SK-N-SH (cell line): ENCODE measurements at regions of chr12 and their contacts with region 1.

Region 1: GRCh38 chr12:121811434-121812319 is 7.9 kb downstream of the SETD1B start:
- DNase-seq: peak; percentile 96
- H3K4me3 ChIP-seq: peak overlapping the region; percentile 62 to 93
- H3K27ac ChIP-seq: peak overlapping the region; percentile 56 to 74; a peak in 3 of 4 replicates
- H3K4me1 ChIP-seq: peaks cover 22 to 24% of the 10 kb centered on the region in 2 experiments; a peak in 2 of 4 replicates
- H3K27me3 ChIP-seq: no peaks in the 10 kb centered on the region
- CTCF ChIP-seq: peak; percentile 91
- EP300 ChIP-seq: no peak
- RAD21 ChIP-seq: peak; percentile 79

Region 2: DNA sequence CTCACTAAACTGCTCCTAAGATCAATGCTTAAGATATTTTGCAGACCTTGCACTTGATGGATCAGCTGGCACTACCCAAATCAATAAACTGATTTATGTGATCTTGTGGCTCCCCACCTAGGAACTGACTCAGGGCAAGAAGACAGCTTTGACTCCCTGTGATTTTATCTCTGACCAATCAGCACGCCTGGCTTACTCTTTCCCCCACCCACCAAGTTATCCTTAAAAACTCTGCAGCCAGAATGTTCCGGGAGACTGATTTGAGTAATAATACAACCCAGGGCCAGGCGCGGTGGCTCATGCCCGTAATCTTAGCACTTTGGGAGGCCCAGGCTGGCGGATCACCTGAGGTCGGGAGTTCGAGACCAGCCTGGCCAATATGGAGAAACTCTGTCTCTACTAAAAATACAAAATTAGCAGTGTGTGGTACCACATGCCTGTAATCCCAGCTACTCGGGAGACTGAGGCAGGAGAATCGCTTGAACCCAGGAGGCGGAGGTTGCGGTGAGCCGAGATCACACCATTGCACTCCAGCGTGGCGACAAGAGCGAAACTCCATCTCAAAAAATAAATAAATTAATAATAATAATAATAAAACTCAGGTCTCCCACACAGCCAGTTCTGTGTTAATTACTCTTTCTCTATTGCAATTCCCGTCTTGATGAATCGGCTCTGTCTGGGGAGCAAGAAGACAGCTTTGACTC is 154.2 kb before region 1 on chr12:
- CTCF ChIA-PET with region 1: no interaction called
- POLR2A ChIA-PET with region 1: no interaction called
- DNase-seq: no peak
- H3K4me3 ChIP-seq: no peak overlapping the region
- H3K27ac ChIP-seq: no peak overlapping the region
- H3K4me1 ChIP-seq: no peaks in the 10 kb centered on the region; a peak in 1 of 4 replicates
- H3K27me3 ChIP-seq: no peaks in the 10 kb centered on the region
- CTCF ChIP-seq: no peak
- EP300 ChIP-seq: no peak
- RAD21 ChIP-seq: no peak

Region 3: GRCh38 chr12:121773011-121773777 is 38.5 kb before region 1 on chr12:
- CTCF ChIA-PET with region 1: interaction called, 36 read pairs
- POLR2A ChIA-PET with region 1: no interaction called
- DNase-seq: peak; percentile 91
- H3K4me3 ChIP-seq: no peak overlapping the region; a peak in 1 of 4 replicates
- H3K27ac ChIP-seq: peak overlapping the region in 1 of 2 experiments; percentile 45; a peak in 1 of 4 replicates
- H3K4me1 ChIP-seq: peaks cover 0 to 12% of the 10 kb centered on the region in 2 experiments; a peak in 1 of 4 replicates
- H3K27me3 ChIP-seq: no peaks in the 10 kb centered on the region
- CTCF ChIP-seq: peak; percentile 89
- EP300 ChIP-seq: 0 out of 4 replicates have a peak, but pooled peaks of 1 of the 2 experiments have one; percentile 12
- RAD21 ChIP-seq: peak; percentile 88

Region 4: DNA sequence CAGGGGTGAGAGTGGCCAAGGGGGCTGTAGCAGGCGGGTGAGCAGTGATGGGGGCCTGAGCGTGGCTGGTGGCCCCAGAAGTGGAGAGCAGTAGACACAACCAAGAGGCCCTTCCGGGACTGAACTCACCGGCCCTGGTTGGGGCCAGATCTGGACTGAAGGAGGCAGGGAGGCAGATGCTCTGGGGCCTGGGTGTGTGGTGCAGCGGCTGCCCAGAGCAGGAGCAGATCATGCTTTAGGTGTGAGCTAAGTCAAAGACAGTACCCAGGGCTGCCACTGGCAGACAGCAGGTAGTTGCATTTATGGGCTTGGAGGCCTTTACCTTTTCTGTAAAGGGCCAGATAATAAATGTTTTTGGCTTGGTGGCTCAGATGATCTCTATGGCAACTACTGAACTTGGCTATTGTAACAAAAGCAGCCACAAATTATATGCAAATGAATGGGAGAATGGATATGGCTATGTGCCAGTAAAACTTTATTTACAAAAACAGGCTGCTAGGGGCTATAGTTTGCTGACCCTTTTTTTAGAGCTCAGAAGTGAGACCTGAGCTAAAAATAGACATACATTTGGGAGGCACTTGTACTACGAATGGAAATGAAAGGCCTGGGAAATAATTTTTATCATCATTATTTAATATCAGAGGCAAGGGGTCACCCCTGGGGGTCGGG is 17.7 kb after region 1 on chr12:
- CTCF ChIA-PET with region 1: interaction called, 50 read pairs
- POLR2A ChIA-PET with region 1: interaction called, 3 read pairs
- DNase-seq: no peak
- H3K4me3 ChIP-seq: no peak overlapping the region
- H3K27ac ChIP-seq: no peak overlapping the region
- H3K4me1 ChIP-seq: peaks cover 0 to 4% of the 10 kb centered on the region in 2 experiments; a peak in 1 of 4 replicates
- H3K27me3 ChIP-seq: no peaks in the 10 kb centered on the region
- CTCF ChIP-seq: no peak
- EP300 ChIP-seq: no peak
- RAD21 ChIP-seq: no peak

Region 5: GRCh38 chr12:121861636-121862254 is 50.1 kb after region 1 on chr12:
- CTCF ChIA-PET with region 1: interaction called, 12 read pairs
- POLR2A ChIA-PET with region 1: no interaction called
- DNase-seq: peak; percentile 60
- H3K4me3 ChIP-seq: no peak overlapping the region
- H3K27ac ChIP-seq: peak overlapping the region; percentile 20 to 59; a peak in 3 of 4 replicates
- H3K4me1 ChIP-seq: peaks cover 7 to 15% of the 10 kb centered on the region in 2 experiments; a peak in 3 of 4 replicates
- H3K27me3 ChIP-seq: no peaks in the 10 kb centered on the region
- CTCF ChIP-seq: no peak
- EP300 ChIP-seq: no peak
- RAD21 ChIP-seq: no peak

Region 6: GRCh38 chr12:121888478-121889266 is 77.0 kb after region 1 on chr12 and contains the start of gene PSMD9:
- CTCF ChIA-PET with region 1: interaction called, 65 read pairs
- POLR2A ChIA-PET with region 1: interaction called, 7 read pairs
- DNase-seq: peak; percentile 97
- H3K4me3 ChIP-seq: peak within 1 kb of the TSS; percentile 68 to 86
- H3K27ac ChIP-seq: peak within 1 kb of the TSS; percentile 85 to 94
- H3K4me1 ChIP-seq: peaks cover 8 to 9% of the 10 kb centered on the region in 2 experiments; a peak in 3 of 4 replicates
- H3K27me3 ChIP-seq: no peaks in the 10 kb centered on the region
- CTCF ChIP-seq: peak; percentile 68
- EP300 ChIP-seq: no peak
- RAD21 ChIP-seq: peak; percentile 73
- polyA plus RNA-seq, gene PSMD9: 227 and 234 TPM in 2 replicates

Region 7: GRCh38 chr12:121992059-121992879 is 180.6 kb after region 1 on chr12:
- CTCF ChIA-PET with region 1: no interaction called
- POLR2A ChIA-PET with region 1: no interaction called
- DNase-seq: no peak
- H3K4me3 ChIP-seq: no peak overlapping the region
- H3K27ac ChIP-seq: peak overlapping the region in 1 of 2 experiments; percentile 92; a peak in 2 of 4 replicates
- H3K4me1 ChIP-seq: peaks cover 3 to 5% of the 10 kb centered on the region in 2 experiments; a peak in 2 of 4 replicates
- H3K27me3 ChIP-seq: no peaks in the 10 kb centered on the region
- CTCF ChIP-seq: no peak
- EP300 ChIP-seq: peak; percentile 36 to 96; a peak in 3 of 4 replicates
- RAD21 ChIP-seq: no peak